A673 (cell line): ENCODE measurements at regions of chr5 and their contacts with region 1.

Region 1: DNA sequence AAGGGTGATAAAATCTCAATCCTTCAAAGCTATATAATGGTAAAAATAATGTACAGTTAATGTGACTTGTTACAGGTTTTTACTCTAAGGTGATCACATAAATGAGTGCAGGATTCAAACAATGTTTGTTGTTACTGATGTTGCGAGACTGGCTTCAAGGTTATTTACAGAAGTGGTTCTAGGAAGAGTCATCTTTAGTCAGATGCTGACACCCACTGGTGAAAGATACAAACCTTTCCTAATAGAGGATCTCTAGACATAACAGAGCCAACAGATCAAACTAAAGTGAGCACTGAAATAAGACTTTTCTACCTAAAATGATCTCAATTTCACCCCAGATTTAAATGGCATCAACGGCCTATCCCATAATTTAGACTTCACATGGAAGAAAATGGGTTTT is 20.2 kb downstream of the ARSB start:
- DNase-seq: peak; percentile 66
- H3K4me3 ChIP-seq: no peak overlapping the region
- H3K27ac ChIP-seq: no peak overlapping the region
- H3K4me1 ChIP-seq: no peaks in the 10 kb centered on the region
- H3K27me3 ChIP-seq: no peaks in the 10 kb centered on the region
- CTCF ChIP-seq: peak; percentile 54

Region 2: DNA sequence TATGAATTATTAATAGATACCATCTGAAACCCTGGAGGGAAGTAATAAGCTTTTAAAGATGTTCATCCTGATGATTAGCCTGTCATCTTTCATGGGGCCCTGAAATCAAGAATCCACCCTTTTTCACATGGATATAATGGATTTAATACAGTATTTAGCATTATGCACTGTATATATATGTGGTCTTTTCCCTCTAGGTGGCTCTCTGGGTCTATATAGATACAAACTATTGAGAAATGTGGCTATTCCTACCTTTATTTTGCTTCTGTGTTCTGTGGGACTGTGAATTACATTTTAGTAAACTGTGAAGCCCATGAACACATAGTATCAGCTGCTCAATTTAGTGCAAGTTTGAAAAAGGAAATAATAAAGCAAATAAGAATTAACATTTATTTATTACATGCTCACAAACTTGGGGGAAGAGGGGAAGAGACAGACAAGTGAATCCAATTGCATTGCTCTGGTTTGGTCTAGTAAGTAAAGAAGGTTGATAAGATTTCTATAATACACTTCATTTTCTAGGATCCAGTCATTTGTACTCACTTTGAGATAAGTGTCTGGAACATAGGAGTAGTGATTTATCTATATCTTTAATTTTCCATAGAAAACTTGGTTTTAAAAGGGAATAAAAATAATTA is 492.3 kb before region 1 on chr5:
- CTCF ChIA-PET with region 1: no interaction called
- POLR2A ChIA-PET with region 1: no interaction called
- intact Hi-C with region 1: loop called (anchors 5 kb)
- DNase-seq: peak; percentile 54
- H3K4me3 ChIP-seq: no peak overlapping the region
- H3K27ac ChIP-seq: no peak overlapping the region
- H3K4me1 ChIP-seq: no peaks in the 10 kb centered on the region
- H3K27me3 ChIP-seq: no peaks in the 10 kb centered on the region
- CTCF ChIP-seq: peak; percentile 45; the same call in 1 of the 2 replicates

Region 3: GRCh38 chr5:78537821-78538220 is 427.1 kb before region 1 on chr5:
- CTCF ChIA-PET with region 1: no interaction called
- POLR2A ChIA-PET with region 1: no interaction called
- intact Hi-C with region 1: loop called (anchors 10 kb)
- DNase-seq: peak; percentile 39
- H3K4me3 ChIP-seq: no peak overlapping the region
- H3K27ac ChIP-seq: no peak overlapping the region
- H3K4me1 ChIP-seq: no peaks in the 10 kb centered on the region
- H3K27me3 ChIP-seq: no peaks in the 10 kb centered on the region
- CTCF ChIP-seq: peak; percentile 45

Region 4: DNA sequence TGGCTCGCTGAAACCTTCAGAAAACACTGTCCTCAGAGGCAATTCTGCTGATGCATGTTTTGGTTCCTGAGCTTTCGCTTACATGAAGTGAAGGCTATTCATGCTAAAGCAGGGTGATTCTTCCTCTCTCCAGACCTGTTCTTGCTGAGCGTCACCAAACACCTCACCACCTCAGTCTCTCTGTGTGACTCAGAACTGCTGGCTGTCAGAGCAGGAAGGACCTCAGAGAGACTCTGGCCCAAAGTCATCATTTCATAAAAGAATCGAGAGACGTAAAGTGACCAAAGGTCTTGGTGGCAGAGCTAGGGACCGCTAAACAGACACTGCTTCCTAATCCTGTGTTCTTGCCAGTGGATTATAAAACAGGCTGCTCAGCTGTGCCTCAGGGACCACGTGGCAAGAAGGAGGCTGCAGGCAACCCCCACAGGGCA is 390.1 kb before region 1 on chr5:
- CTCF ChIA-PET with region 1: no interaction called
- POLR2A ChIA-PET with region 1: no interaction called
- intact Hi-C with region 1: no loop called
- DNase-seq: no peak
- H3K4me3 ChIP-seq: no peak overlapping the region
- H3K27ac ChIP-seq: no peak overlapping the region
- H3K4me1 ChIP-seq: peaks cover 4% of the 10 kb centered on the region
- H3K27me3 ChIP-seq: no peaks in the 10 kb centered on the region
- CTCF ChIP-seq: no peak

Region 5: DNA sequence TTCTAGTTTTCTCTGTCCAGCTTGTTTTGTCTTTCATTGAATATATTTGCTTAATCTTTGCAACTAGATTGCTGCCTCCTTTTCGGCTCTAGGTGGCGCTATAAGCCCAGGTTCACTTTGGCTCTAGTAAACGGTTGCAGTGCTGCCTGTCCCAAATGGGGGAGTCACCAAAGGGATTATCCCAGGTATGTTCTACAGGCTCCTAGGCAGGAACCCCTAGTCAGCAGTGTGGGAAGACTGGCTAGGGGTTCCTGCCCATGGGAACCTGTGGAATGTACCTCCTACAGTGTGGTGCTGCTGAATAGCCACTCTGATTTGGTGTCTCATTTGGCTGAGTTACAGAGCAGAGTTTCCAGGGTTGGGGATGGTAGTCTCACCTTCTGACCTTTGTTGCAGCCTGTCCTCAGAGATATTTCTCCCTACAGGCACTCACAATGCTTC is 64.9 kb before region 1 on chr5:
- CTCF ChIA-PET with region 1: interaction called, 11 read pairs
- POLR2A ChIA-PET with region 1: no interaction called
- intact Hi-C with region 1: loop called (anchors 1 kb)
- DNase-seq: peak; percentile 76
- H3K4me3 ChIP-seq: no peak overlapping the region
- H3K27ac ChIP-seq: no peak overlapping the region
- H3K4me1 ChIP-seq: no peaks in the 10 kb centered on the region
- H3K27me3 ChIP-seq: no peaks in the 10 kb centered on the region
- CTCF ChIP-seq: peak; percentile 94